ENCODE measurements at regions of chr3 and their contacts with region 1.

Region 1: GRCh38 chr3:159828542-159828943 is 160.1 kb upstream of the IL12A start:
- DNase-seq: peak; percentile 50
- H3K27ac ChIP-seq: no peak overlapping the region
- CTCF ChIP-seq: peak; percentile 53

Region 2: GRCh38 chr3:159191443-159191842 is 637.1 kb before region 1 on chr3:
- CTCF ChIA-PET with region 1: no interaction called
- POLR2A ChIA-PET with region 1: no interaction called
- DNase-seq: peak; percentile 13
- H3K27ac ChIP-seq: no peak overlapping the region
- CTCF ChIP-seq: no peak

Region 3: GRCh38 chr3:159390656-159391212 is 437.8 kb before region 1 on chr3:
- CTCF ChIA-PET with region 1: no interaction called
- POLR2A ChIA-PET with region 1: no interaction called
- DNase-seq: no peak
- H3K27ac ChIP-seq: no peak overlapping the region
- CTCF ChIP-seq: no peak

Region 4: DNA sequence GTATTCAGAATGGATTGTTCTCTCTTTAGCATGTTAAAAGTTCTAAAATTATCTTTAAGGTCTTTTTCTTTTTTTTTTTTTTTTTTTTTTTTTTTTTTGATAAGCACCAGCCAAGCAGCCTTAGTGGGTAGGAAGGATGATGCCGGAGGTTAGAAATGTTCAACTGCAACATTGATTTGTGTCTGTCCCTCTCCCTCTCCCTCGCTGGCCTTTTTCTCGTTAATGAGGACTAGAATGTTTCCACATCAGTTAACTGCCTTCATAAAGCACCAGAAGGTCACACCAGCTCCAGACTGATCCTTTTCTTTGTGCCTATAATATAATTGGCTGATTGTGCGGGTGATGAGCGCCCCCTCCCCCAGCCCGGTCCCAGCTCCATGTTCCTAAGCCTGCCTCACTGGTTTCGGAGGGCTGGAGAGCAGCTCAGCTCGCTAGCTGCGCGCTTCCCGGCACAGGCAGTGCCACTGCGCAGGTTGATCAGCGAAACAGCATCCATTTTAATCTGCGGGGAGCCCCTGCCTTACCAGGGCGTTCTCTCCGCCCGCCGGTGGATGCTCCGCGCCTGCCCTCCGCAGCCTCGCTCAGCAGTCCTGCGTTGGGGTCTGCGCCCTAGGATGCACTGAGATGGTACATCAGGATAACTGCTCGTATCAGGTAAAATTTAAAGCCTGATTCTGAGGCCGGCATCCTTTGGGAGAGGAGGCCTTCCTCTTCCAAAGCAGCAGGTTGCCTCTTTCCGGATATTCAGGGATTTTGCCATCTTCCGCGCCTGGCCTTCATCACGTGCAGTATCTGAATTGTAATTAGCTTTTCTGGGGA is 11.2 kb after region 1 on chr3:
- CTCF ChIA-PET with region 1: no interaction called
- POLR2A ChIA-PET with region 1: no interaction called
- DNase-seq: no peak
- H3K27ac ChIP-seq: peak within 1 kb of the TSS; percentile 69
- CTCF ChIP-seq: no peak

Region 5: GRCh38 chr3:159929435-159930141 is 101.0 kb after region 1 on chr3:
- CTCF ChIA-PET with region 1: no interaction called
- POLR2A ChIA-PET with region 1: no interaction called
- DNase-seq: peak; percentile 36
- H3K27ac ChIP-seq: peak overlapping the region; percentile 83
- CTCF ChIP-seq: no peak

Region 6: GRCh38 chr3:160003520-160004128 is 175.1 kb after region 1 on chr3:
- CTCF ChIA-PET with region 1: interaction called, 15 read pairs
- POLR2A ChIA-PET with region 1: no interaction called
- DNase-seq: peak; percentile 55
- H3K27ac ChIP-seq: no peak overlapping the region
- CTCF ChIP-seq: peak; percentile 60

Measured in RWPE1 (cell line).